ENCODE measurements at regions of chr6 and their contacts with region 1.

Region 1: GRCh38 chr6:147970975-147971374 is 371.7 kb upstream of the SASH1 start:
- DNase-seq: no peak
- H3K4me3 ChIP-seq: no peak overlapping the region
- H3K27ac ChIP-seq: no peak overlapping the region
- H3K4me1 ChIP-seq: no peaks in the 10 kb centered on the region
- H3K27me3 ChIP-seq: no peaks in the 10 kb centered on the region
- CTCF ChIP-seq: no peak
- EP300 ChIP-seq: no peak
- POLR2A ChIP-seq: no peak

Region 2: GRCh38 chr6:147179809-147180208 is 791.2 kb before region 1 on chr6:
- intact Hi-C with region 1: loop called in 1 of 4 experiments (anchors 5 kb)
- DNase-seq: no peak
- H3K4me3 ChIP-seq: no peak overlapping the region
- H3K27ac ChIP-seq: no peak overlapping the region
- H3K4me1 ChIP-seq: no peaks in the 10 kb centered on the region
- H3K27me3 ChIP-seq: no peaks in the 10 kb centered on the region
- CTCF ChIP-seq: no peak
- EP300 ChIP-seq: no peak
- POLR2A ChIP-seq: no peak

Measured in ovary (tissue), 10 donors.